Testis (tissue), 5 donors: ENCODE measurements at regions of chr12 and their contacts with region 1.

Region 1: DNA sequence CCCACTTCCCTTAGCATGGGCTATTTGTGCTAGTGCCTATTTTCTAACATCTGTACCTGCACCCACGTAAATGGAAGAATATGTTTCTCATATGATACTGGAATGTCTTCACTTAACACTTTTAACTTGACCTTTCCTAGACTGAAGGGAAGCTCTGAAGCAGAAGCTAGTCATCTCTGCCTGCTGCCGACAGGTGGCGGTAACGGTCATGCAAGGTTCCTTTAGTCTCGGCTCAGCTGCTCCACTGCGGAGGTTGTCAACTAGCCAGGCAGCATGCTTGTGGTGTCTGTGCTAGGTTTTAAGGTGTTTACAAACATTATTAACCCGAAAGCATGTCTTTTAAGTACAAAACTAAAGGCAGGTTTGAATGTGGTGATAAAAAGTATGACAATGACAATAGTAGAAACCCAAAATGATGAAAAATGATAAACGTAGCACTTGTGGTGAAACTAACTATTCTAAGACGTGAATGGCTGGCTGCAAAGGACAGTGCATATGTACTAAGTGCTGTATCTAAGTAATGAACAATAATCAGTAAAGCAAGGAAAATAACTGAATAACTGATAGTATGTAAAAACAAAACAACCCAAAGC is 117.2 kb downstream of the GRIN2B start:
- DNase-seq: peak; percentile 86
- H3K4me3 ChIP-seq: no peak overlapping the region
- H3K27ac ChIP-seq: no peak overlapping the region
- H3K4me1 ChIP-seq: no peaks in the 10 kb centered on the region
- H3K27me3 ChIP-seq: no peaks in the 10 kb centered on the region
- CTCF ChIP-seq: peak in 2 of 3 experiments; percentile 63 to 73
- POLR2A ChIP-seq: no peak

Region 2: DNA sequence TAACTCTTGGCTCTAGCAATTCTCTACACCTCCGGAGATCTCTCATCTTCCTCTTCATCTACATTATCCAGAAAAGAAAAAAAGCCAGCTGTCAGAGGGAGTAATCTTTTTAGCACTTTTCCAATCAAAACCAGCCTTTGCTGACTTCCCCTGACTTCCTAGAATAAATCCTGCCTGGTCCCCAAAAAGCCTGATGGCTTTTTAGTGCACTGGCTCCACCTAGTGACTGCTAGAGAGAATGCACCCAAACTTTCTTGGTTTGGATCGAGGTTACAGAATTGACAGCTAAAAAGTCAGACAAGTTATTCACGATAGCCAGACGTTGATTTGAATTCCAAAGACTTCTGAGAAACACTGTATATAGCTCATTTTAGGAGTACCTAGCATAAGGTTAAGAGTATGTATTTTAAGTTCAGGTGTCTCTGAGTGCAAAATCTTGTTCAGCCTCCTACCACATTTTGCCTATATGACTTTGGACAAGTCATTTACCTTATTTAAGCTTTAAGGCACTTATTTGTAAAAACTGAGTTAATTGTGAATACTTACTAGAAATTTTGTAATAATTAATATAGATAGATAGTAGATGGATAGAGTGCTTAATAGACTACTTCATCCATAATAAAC is 302.9 kb after region 1 on chr12:
- intact Hi-C with region 1: loop called (anchors 10 kb)
- DNase-seq: peak; percentile 47
- H3K4me3 ChIP-seq: no peak overlapping the region
- H3K27ac ChIP-seq: no peak overlapping the region
- H3K4me1 ChIP-seq: no peaks in the 10 kb centered on the region
- H3K27me3 ChIP-seq: no peaks in the 10 kb centered on the region
- CTCF ChIP-seq: peak; percentile 66 to 89 (median 81)
- POLR2A ChIP-seq: no peak